Adrenal gland (tissue), 19 donors: ENCODE measurements at regions of chr3 and their contacts with region 1.

Region 1: DNA sequence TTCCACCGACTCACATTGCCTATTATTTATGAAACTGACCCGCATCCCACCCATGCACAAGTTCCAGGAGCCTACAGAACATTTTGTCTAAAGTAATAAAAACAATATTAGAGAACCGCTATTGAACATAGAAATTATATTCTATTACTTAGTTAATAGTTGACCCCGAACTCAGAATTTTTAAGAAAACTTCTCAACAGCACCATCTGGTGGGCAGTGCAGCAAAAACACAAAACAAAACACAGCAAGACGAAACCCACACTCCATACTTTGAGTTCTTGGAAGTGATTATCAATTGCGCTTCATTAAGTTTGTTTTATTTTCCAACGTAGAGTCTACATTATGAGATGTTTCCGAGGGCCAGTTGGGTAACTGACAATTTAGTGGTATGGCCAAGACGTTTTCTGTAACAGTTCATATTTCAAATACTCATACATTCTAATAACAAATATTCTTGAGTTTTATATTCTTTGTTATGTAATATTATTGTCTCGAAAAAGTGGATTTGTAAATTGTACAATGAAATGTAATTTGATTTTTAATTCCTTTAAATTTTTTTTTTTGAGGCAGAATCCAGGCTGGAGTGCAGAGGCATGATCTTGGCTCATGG is 24.0 kb upstream of the C3orf70 start:
- DNase-seq: peak in 4 of 7 donors; percentile 13 to 72 (median 44)
- H3K4me3 ChIP-seq: no peak overlapping the region
- H3K27ac ChIP-seq: no peak overlapping the region
- H3K4me1 ChIP-seq: peaks cover 0 to 5% of the 10 kb centered on the region in 2 donors
- H3K27me3 ChIP-seq: peaks cover 8% of the 10 kb centered on the region
- CTCF ChIP-seq: peak; percentile 40 to 74 (median 54)
- POLR2A ChIP-seq: no peak

Region 2: DNA sequence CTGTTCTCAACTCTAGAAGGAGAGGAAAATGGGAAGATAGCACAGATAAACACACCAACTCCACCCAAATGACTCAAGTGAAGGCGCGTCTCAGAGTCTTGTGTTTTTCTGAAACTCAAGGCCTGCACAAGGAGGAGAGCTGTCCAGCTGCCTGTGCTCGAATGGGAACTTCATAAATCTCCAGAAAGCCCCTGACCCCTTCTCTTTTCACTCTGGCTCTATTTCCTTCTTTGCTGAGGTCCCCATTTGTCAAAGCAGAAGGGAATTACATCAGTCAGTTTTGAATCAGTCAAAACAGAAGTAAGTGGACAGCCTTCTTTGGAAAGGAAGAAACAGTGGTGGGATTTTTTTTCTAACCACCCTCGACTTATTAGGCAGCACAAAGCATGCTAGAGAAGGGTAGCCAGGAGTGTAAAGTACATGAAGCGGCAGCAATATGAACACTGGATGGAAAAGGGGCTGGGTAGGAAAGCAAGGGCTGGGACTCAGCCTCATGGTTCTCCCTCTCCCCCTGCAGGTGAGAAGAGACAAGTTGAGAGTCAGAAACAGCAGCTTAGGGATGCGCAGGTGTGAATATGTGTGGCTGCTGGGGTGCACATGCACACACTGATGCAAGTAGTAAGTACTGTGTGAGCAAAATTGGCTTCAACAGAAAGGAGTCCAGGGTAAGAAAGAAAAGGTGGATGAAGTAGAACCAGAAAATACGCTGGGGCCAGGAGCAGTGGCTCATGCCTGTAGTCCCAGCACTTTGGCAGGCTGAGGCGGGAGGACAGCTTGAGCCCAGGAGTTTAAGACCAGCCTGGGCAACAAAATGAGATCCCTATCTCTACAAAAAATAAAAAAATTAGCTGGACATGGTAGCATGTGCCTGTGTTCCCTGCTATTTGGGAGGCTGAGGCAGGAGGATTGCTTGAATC is 428.4 kb before region 1 on chr3:
- intact Hi-C with region 1: no loop called
- DNase-seq: no peak
- H3K4me3 ChIP-seq: no peak overlapping the region
- H3K27ac ChIP-seq: no peak overlapping the region
- H3K4me1 ChIP-seq: no peaks in the 10 kb centered on the region
- H3K27me3 ChIP-seq: no peaks in the 10 kb centered on the region
- CTCF ChIP-seq: peak in 1 of 6 experiments; percentile 15
- POLR2A ChIP-seq: no peak

Region 3: DNA sequence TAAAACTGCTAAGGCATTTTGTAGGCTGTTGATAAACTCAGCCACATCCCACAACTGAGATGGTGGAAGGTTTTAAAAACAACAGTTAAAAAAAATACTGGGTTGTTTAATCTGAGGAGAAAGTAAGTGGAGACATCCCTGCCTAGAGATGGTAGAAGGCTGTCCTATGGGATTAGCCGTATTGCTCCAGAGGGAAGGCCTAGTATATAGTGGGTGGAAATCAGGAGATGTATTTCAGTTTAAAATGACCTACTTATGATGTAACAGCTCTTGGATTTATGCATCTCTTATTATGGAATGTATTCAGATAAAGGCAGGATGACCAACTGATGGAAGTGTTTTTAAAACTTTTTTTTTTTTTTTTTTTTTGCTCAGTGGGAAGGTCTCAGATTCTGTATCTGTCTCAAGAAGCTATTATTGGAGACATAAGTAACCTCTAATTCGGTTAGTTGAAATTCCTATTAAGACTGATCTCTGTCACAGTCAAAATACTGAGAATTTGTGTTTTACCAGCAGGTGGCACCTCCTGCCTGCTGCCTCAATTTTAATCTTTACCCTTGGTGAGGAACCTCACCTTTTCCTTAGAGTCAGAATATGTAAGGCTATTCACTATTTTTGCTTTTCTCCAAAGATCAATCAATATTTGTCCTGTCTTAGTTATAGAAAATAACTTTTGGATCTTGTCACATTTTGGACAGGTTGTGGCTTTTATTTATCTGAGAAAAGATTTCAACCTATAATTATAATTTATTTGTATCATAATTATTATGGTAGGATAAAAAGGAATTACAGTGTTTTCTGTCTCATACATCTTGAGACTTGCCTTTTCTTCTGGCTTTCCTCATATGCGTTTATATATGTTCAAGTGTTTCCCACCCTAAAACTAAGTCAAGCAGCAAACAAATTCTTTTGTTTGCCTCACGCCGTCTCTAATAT is 301.9 kb before region 1 on chr3:
- intact Hi-C with region 1: loop called (anchors 5 to 10 kb)
- DNase-seq: peak in 3 of 7 donors; percentile 13 to 59 (median 25)
- H3K4me3 ChIP-seq: no peak overlapping the region
- H3K27ac ChIP-seq: no peak overlapping the region
- H3K4me1 ChIP-seq: no peaks in the 10 kb centered on the region
- H3K27me3 ChIP-seq: no peaks in the 10 kb centered on the region
- CTCF ChIP-seq: peak in 5 of 6 experiments; percentile 55 to 76 (median 65)
- POLR2A ChIP-seq: no peak

Region 4: GRCh38 chr3:185519021-185519420 is 342.2 kb after region 1 on chr3:
- intact Hi-C with region 1: no loop called
- DNase-seq: no peak
- H3K4me3 ChIP-seq: no peak overlapping the region
- H3K27ac ChIP-seq: no peak overlapping the region
- H3K4me1 ChIP-seq: no peaks in the 10 kb centered on the region
- H3K27me3 ChIP-seq: no peaks in the 10 kb centered on the region
- CTCF ChIP-seq: no peak
- POLR2A ChIP-seq: no peak